CD4-positive, alpha-beta memory T cell (primary cell): ENCODE measurements at regions of chr1 and their contacts with region 1.

Region 1: GRCh38 chr1:46603858-46604549 is at the start of gene MKNK1:
- DNase-seq: peak; percentile 98 to 99 (median 99)
- H3K4me3 ChIP-seq: peak within 1 kb of the TSS; percentile 63 to 86
- H3K4me3 Mint-ChIP-seq: peak within 1 kb of the TSS; percentile 93 to 97 (median 94)
- H3K27ac ChIP-seq: peak within 1 kb of the TSS; percentile 71
- H3K27ac Mint-ChIP-seq: peak within 1 kb of the TSS; percentile 90 to 97 (median 95)
- H3K4me1 ChIP-seq: peaks cover 57% of the 10 kb centered on the region
- H3K4me1 Mint-ChIP-seq: peaks cover 49 to 77% (median 63%) of the 10 kb centered on the region in 4 donors
- H3K27me3 ChIP-seq: no peaks in the 10 kb centered on the region
- H3K27me3 Mint-ChIP-seq: no peaks in the 10 kb centered on the region
- total RNA-seq, gene MKNK1: 54.3 to 54.9 TPM

Region 2: GRCh38 chr1:46370214-46370633 is 233.8 kb before region 1 on chr1:
- CTCF ChIA-PET with region 1: no interaction called
- POLR2A ChIA-PET with region 1: no interaction called
- intact Hi-C with region 1: no loop called
- DNase-seq: no peak
- H3K4me3 ChIP-seq: no peak overlapping the region
- H3K4me3 Mint-ChIP-seq: no peak overlapping the region
- H3K27ac ChIP-seq: no peak overlapping the region
- H3K27ac Mint-ChIP-seq: peak overlapping the region in 1 of 7 donors; percentile 70
- H3K4me1 ChIP-seq: no peaks in the 10 kb centered on the region
- H3K4me1 Mint-ChIP-seq: no peaks in the 10 kb centered on the region
- H3K27me3 ChIP-seq: no peaks in the 10 kb centered on the region
- H3K27me3 Mint-ChIP-seq: no peaks in the 10 kb centered on the region

Region 3: GRCh38 chr1:46437723-46438122 is 166.3 kb before region 1 on chr1:
- CTCF ChIA-PET with region 1: no interaction called
- POLR2A ChIA-PET with region 1: no interaction called
- intact Hi-C with region 1: no loop called
- DNase-seq: no peak
- H3K4me3 ChIP-seq: no peak overlapping the region
- H3K4me3 Mint-ChIP-seq: no peak overlapping the region
- H3K27ac ChIP-seq: no peak overlapping the region
- H3K27ac Mint-ChIP-seq: peak overlapping the region in 2 of 7 donors; percentile 9 to 61
- H3K4me1 ChIP-seq: peaks cover 5% of the 10 kb centered on the region
- H3K4me1 Mint-ChIP-seq: peaks cover 5 to 8% (median 7%) of the 10 kb centered on the region in 4 donors
- H3K27me3 ChIP-seq: no peaks in the 10 kb centered on the region
- H3K27me3 Mint-ChIP-seq: peaks cover 0 to 2% of the 10 kb centered on the region in 2 donors

Region 4: GRCh38 chr1:46589529-46589928 is 14.5 kb before region 1 on chr1:
- CTCF ChIA-PET with region 1: interaction called, 12 read pairs
- POLR2A ChIA-PET with region 1: interaction called, 9 read pairs
- intact Hi-C with region 1: no loop called
- DNase-seq: no peak
- H3K4me3 ChIP-seq: no peak overlapping the region
- H3K4me3 Mint-ChIP-seq: no peak overlapping the region
- H3K27ac ChIP-seq: no peak overlapping the region
- H3K27ac Mint-ChIP-seq: peak overlapping the region in 1 of 7 donors; percentile 2
- H3K4me1 ChIP-seq: peaks cover 6% of the 10 kb centered on the region
- H3K4me1 Mint-ChIP-seq: peaks cover 6 to 25% (median 18%) of the 10 kb centered on the region in 4 donors
- H3K27me3 ChIP-seq: no peaks in the 10 kb centered on the region
- H3K27me3 Mint-ChIP-seq: no peaks in the 10 kb centered on the region

Region 5: DNA sequence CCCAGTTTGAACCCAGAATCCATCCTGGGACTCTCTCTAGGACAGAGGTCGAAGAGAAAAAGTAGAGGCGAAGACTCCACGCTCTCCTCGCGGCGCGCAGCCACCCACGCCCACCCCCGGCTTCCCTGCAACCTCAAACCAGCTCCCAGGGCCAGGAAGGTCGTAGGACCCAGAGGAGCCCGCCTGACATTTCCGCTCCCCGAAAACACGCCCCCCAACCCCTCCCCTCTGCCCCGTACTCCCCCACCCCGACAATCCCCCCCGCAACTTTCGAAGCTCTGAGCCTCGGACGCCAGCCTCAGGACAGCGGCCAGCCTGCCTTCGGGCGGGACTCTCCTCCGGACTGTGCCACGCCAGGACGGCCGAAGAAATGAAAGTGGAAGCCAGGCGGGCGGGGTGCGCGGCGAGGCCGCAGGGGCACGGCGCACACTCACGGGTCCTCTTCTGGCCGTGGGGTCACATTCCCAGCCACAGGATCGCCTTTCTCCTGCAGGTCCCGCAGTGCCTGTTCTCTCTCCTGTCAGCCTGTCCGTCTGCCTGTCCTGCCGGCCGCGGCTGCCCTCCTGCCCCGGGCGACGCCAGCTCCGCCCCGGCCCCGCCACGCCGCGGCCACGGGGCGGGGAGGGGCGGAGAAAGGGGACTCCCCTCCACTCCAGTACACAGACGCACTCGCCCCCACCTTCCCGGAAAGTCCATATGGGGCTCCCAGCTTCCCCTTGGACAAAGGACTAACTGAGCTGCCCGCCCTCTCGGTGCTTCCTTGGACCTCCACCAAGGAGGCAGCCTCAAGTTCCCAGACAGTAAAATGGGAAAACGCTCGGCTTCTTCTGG is 12.5 kb after region 1 on chr1 and contains the start of gene MOB3C:
- CTCF ChIA-PET with region 1: interaction called, 37 read pairs
- POLR2A ChIA-PET with region 1: interaction called, 182 read pairs
- intact Hi-C with region 1: loop called (anchors 1 kb)
- DNase-seq: peak; percentile 62 to 74 (median 63)
- H3K4me3 ChIP-seq: peak within 1 kb of the TSS; percentile 82 to 96
- H3K4me3 Mint-ChIP-seq: peak within 1 kb of the TSS; percentile 92 to 96 (median 94)
- H3K27ac ChIP-seq: peak within 1 kb of the TSS; percentile 81
- H3K27ac Mint-ChIP-seq: peak within 1 kb of the TSS; percentile 87 to 97 (median 94)
- H3K4me1 ChIP-seq: peaks cover 51% of the 10 kb centered on the region
- H3K4me1 Mint-ChIP-seq: peaks cover 22 to 57% (median 41%) of the 10 kb centered on the region in 4 donors
- H3K27me3 ChIP-seq: no peaks in the 10 kb centered on the region
- H3K27me3 Mint-ChIP-seq: no peaks in the 10 kb centered on the region
- total RNA-seq, gene MOB3C: 27.8 to 29.5 TPM

Region 6: GRCh38 chr1:46622344-46622743 is 18.3 kb after region 1 on chr1:
- CTCF ChIA-PET with region 1: interaction called, 37 read pairs
- POLR2A ChIA-PET with region 1: interaction called, 182 read pairs
- intact Hi-C with region 1: no loop called
- DNase-seq: no peak
- H3K4me3 ChIP-seq: no peak overlapping the region
- H3K4me3 Mint-ChIP-seq: no peak overlapping the region
- H3K27ac ChIP-seq: no peak overlapping the region
- H3K27ac Mint-ChIP-seq: no peak overlapping the region
- H3K4me1 ChIP-seq: peaks cover under 1% of the 10 kb centered on the region
- H3K4me1 Mint-ChIP-seq: peaks cover under 1 to 6% (median 2%) of the 10 kb centered on the region in 4 donors
- H3K27me3 ChIP-seq: no peaks in the 10 kb centered on the region
- H3K27me3 Mint-ChIP-seq: no peaks in the 10 kb centered on the region

Region 7: DNA sequence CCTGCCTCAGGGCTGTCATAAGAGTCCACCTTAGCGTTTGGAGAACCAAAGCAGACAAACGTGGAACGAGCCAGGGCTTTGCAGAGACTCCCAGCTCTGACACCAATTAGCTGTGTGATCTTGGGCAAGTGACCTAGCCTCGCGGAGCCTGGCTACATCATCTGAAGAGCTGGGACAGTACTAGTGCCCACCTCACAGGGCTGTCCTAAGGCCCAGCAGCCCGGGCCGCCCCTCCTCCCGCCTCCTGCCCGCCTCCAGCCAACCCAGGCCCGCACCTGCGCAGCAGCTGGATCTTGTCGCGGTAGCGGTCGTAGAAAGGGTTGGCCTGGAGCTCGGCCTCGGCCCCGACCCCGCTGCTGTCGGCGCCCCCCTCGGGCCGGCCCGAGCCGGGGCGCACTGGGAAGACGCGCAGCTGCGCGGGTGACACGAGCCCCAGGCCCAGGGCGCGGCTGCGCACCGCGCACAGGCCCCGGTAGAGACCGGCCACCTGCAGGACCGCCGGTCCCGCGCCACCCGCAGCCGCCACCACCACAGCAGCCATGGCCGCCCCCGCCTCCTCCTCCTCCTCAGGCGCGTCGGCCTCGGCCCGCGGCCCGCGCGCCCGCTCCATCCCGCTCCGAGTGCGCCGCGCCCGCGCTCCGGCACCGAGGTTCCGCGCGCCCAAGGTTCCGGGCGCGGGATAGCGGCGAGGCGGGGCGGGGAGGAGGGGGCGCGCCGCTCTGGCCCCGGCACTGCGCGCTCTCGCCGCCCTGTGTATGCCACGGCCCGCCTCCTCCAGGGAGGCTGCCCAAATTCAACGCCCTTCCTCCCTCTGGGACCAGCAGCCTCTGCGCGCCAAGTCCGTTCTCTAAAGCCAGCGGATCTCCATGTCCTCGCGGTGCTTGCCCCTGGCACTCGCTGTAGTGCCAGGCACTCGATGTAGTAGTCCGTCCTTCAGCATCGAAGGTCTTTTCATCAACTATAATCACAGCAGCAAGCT is 64.1 kb after region 1 on chr1 and contains the start of gene ATPAF1:
- CTCF ChIA-PET with region 1: interaction called, 4 read pairs
- POLR2A ChIA-PET with region 1: interaction called, 31 read pairs
- intact Hi-C with region 1: loop called (anchors 1 kb)
- DNase-seq: peak; percentile 62 to 72 (median 68)
- H3K4me3 ChIP-seq: peak within 1 kb of the TSS; percentile 44 to 66
- H3K4me3 Mint-ChIP-seq: peak within 1 kb of the TSS in 7 of 8 donors; percentile 85 to 91 (median 88)
- H3K27ac ChIP-seq: peak within 1 kb of the TSS; percentile 48
- H3K27ac Mint-ChIP-seq: peak within 1 kb of the TSS; percentile 48 to 85 (median 78)
- H3K4me1 ChIP-seq: peaks cover 23% of the 10 kb centered on the region
- H3K4me1 Mint-ChIP-seq: peaks cover 15 to 26% (median 21%) of the 10 kb centered on the region in 4 donors
- H3K27me3 ChIP-seq: no peaks in the 10 kb centered on the region
- H3K27me3 Mint-ChIP-seq: no peaks in the 10 kb centered on the region
- total RNA-seq, gene ATPAF1: 32.9 to 37.6 TPM

Region 8: GRCh38 chr1:46677339-46677738 is 73.3 kb after region 1 on chr1:
- CTCF ChIA-PET with region 1: interaction called, 3 read pairs
- POLR2A ChIA-PET with region 1: interaction called, 10 read pairs
- intact Hi-C with region 1: no loop called
- DNase-seq: no peak
- H3K4me3 ChIP-seq: no peak overlapping the region
- H3K4me3 Mint-ChIP-seq: no peak overlapping the region
- H3K27ac ChIP-seq: peak overlapping the region; percentile 47
- H3K27ac Mint-ChIP-seq: peak overlapping the region; percentile 26 to 97 (median 88)
- H3K4me1 ChIP-seq: peaks cover 22% of the 10 kb centered on the region
- H3K4me1 Mint-ChIP-seq: peaks cover 18 to 35% (median 22%) of the 10 kb centered on the region in 4 donors
- H3K27me3 ChIP-seq: no peaks in the 10 kb centered on the region
- H3K27me3 Mint-ChIP-seq: no peaks in the 10 kb centered on the region

Region 9: GRCh38 chr1:46718727-46719622 is 115.0 kb after region 1 on chr1 and contains the start of gene EFCAB14:
- CTCF ChIA-PET with region 1: interaction called, 16 read pairs
- POLR2A ChIA-PET with region 1: interaction called, 16 read pairs
- intact Hi-C with region 1: loop called (anchors 1 kb)
- DNase-seq: peak; percentile 99 to 100 (median 99)
- H3K4me3 ChIP-seq: peak within 1 kb of the TSS; percentile 40 to 72
- H3K4me3 Mint-ChIP-seq: peak within 1 kb of the TSS; percentile 90 to 97 (median 92)
- H3K27ac ChIP-seq: peak within 1 kb of the TSS; percentile 88
- H3K27ac Mint-ChIP-seq: peak within 1 kb of the TSS; percentile 91 to 97 (median 95)
- H3K4me1 ChIP-seq: peaks cover 40% of the 10 kb centered on the region
- H3K4me1 Mint-ChIP-seq: peaks cover 31 to 53% (median 45%) of the 10 kb centered on the region in 4 donors
- H3K27me3 ChIP-seq: no peaks in the 10 kb centered on the region
- H3K27me3 Mint-ChIP-seq: no peaks in the 10 kb centered on the region
- total RNA-seq, gene EFCAB14: 96.7 to 98.5 TPM